ENCODE measurements at regions of chr5 and their contacts with region 1.

Region 1: DNA sequence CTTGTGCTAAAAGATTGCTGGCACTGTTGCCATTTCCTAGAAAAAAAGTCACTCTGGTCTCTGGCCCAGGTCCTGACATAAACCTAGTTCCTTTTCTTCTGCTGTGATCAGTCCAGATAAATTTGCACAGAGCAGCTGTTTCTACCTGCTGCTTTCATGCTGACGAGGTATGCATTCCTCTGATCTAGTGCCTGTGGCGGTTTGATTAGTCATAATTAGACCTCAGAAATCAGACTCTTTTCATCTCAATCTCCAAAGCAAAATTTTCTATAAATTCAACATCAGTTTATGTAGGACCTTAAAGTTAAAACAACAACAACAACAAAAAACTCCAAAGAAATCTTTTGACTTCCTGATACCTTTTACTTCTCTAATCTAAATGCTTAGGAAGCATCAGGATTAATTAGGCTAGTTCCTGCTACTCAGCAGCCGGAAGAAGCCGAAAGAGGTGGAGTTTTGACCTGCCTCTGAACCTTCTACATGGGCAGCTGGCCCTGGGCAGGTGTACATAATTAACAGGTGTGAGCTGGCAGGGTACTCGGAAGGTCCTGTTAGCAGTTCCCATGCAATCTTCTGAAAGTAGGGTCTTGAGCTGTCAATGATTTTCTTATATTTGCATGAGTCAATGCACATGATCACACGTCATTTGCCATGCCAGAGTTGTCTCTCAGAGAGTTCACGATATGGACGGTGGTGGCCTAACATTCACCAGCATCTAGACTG is 83.3 kb upstream of the CCDC112 start:
- DNase-seq: no peak
- H3K4me3 ChIP-seq: no peak overlapping the region
- H3K27ac ChIP-seq: no peak overlapping the region
- H3K4me1 ChIP-seq: no peaks in the 10 kb centered on the region
- CTCF ChIP-seq: no peak

Region 2: GRCh38 chr5:115586601-115587048 is 206.8 kb after region 1 on chr5:
- CTCF ChIA-PET with region 1: no interaction called
- POLR2A ChIA-PET with region 1: no interaction called
- intact Hi-C with region 1: loop called (anchors 10 kb)
- DNase-seq: peak; percentile 44
- H3K4me3 ChIP-seq: no peak overlapping the region
- H3K27ac ChIP-seq: no peak overlapping the region
- H3K4me1 ChIP-seq: no peaks in the 10 kb centered on the region
- CTCF ChIP-seq: peak; percentile 85

Measured in OCI-LY7 (cell line).